GM23248 (cell line): ENCODE measurements at regions of chr16 and their contacts with region 1.

Region 1: GRCh38 chr16:180938-181667 is 844 bp downstream of the HBQ1 start:
- DNase-seq: peak; percentile 81
- H3K4me3 ChIP-seq: peak overlapping the region; percentile 56
- H3K27ac ChIP-seq: no peak overlapping the region
- H3K4me1 ChIP-seq: no peaks in the 10 kb centered on the region
- H3K27me3 ChIP-seq: peaks cover 30% of the 10 kb centered on the region

Region 2: DNA sequence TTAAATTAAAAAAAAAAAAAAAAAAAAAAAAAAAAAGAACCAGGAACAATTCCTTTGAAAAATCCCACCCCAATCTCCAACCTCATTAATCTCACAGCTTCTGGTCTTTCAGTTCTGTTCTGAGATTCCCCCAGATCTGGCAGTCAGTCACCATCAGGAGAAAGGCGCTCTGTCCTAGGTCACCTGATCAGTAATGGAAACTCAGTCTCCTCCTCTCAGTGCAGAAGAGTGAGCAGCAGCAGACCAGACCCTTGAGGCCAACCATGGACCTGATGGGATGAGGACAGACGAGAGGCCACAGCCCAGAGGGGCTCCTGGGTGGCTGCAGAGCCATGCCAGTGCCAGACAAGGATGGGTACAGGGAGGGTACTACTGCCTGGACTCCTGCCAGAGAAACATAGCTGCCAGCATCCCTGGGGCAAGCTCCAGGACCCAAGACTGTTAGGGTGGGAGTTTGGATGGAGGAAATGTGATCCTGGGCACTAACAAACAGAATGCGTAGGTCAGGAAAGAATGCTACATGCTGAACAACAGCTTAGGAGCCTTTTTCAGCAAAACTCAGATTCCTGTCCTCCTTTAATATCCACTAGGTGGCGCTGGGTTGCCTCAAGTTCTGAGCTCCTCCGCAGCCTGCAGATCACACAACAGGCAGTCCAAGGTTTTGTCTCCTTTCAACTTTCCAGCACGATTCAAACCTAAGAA is 74.3 kb before region 1 on chr16:
- in situ Hi-C with region 1: loop called (anchors 5 kb)
- DNase-seq: peak; percentile 90
- H3K4me3 ChIP-seq: no peak overlapping the region
- H3K27ac ChIP-seq: no peak overlapping the region
- H3K4me1 ChIP-seq: no peaks in the 10 kb centered on the region
- H3K27me3 ChIP-seq: no peaks in the 10 kb centered on the region